ENCODE measurements at regions of chr17 and their contacts with region 1.

Region 1: GRCh38 chr17:8041249-8041928 is 2.5 kb downstream of the ALOX15B start:
- DNase-seq: no peak
- H3K4me3 ChIP-seq: peak overlapping the region in 2 of 4 donors; percentile 37 to 56
- H3K27ac ChIP-seq: peak overlapping the region; percentile 81 to 89 (median 84)
- H3K4me1 ChIP-seq: peaks cover 8 to 46% (median 24%) of the 10 kb centered on the region in 3 donors
- H3K27me3 ChIP-seq: peaks cover 0 to 53% (median 0%) of the 10 kb centered on the region in 4 donors
- CTCF ChIP-seq: peak; percentile 50 to 82 (median 63)
- POLR2A ChIP-seq: no peak

Region 2: DNA sequence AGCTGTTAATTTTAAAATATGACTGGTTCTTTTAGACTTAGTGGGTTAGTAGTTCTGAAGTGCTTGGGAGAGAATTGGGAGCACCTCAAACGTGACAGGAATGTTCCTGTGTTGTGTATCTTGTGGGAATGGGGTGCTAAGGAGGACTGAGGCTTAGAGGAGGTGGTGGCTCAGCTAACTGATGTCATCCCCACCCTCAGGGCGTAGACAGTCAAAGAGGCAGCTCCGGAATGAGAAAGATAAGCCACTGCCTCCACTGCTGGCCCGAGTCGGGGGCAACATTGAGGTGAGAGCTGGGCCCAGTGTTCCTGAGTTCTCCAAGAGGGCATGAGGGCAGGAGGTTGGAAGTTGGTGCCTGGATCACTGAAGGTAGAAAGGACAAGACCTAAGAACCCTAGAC is 136.0 kb before region 1 on chr17:
- intact Hi-C with region 1: loop called (anchors 5 kb)
- DNase-seq: no peak
- H3K4me3 ChIP-seq: no peak overlapping the region
- H3K27ac ChIP-seq: no peak overlapping the region
- H3K4me1 ChIP-seq: no peaks in the 10 kb centered on the region
- H3K27me3 ChIP-seq: no peaks in the 10 kb centered on the region
- CTCF ChIP-seq: no peak
- POLR2A ChIP-seq: no peak

Region 3: GRCh38 chr17:7956228-7956965 is 85.0 kb before region 1 on chr17:
- intact Hi-C with region 1: no loop called
- DNase-seq: no peak
- H3K4me3 ChIP-seq: no peak overlapping the region
- H3K27ac ChIP-seq: no peak overlapping the region
- H3K4me1 ChIP-seq: no peaks in the 10 kb centered on the region
- H3K27me3 ChIP-seq: peaks cover 0 to 26% (median 0%) of the 10 kb centered on the region in 4 donors
- CTCF ChIP-seq: no peak
- POLR2A ChIP-seq: no peak

Region 4: GRCh38 chr17:8012724-8013640 is 28.4 kb before region 1 on chr17:
- intact Hi-C with region 1: loop called (anchors 5 kb)
- DNase-seq: no peak
- H3K4me3 ChIP-seq: no peak overlapping the region
- H3K27ac ChIP-seq: no peak overlapping the region
- H3K4me1 ChIP-seq: peaks cover 21 to 27% (median 24%) of the 10 kb centered on the region in 3 donors
- H3K27me3 ChIP-seq: peaks cover 0 to 47% (median 2%) of the 10 kb centered on the region in 4 donors
- CTCF ChIP-seq: no peak
- POLR2A ChIP-seq: no peak